Calu3 (cell line): ENCODE measurements at regions of chr1 and their contacts with region 1.

Region 1: GRCh38 chr1:110312188-110313121 is 26.7 kb upstream of the RBM15 start:
- DNase-seq: peak; percentile 78
- H3K4me3 Mint-ChIP-seq: no peak overlapping the region
- H3K27ac Mint-ChIP-seq: no peak overlapping the region
- H3K4me1 Mint-ChIP-seq: peaks cover 19% of the 10 kb centered on the region
- H3K27me3 Mint-ChIP-seq: no peaks in the 10 kb centered on the region
- CTCF ChIP-seq: peak; percentile 75

Region 2: GRCh38 chr1:110235834-110236682 is 76.4 kb before region 1 on chr1:
- CTCF ChIA-PET with region 1: interaction called, 4 read pairs
- intact Hi-C with region 1: loop called (anchors 1 kb)
- DNase-seq: peak; percentile 52
- H3K4me3 Mint-ChIP-seq: peak overlapping the region; percentile 61
- H3K27ac Mint-ChIP-seq: peak overlapping the region; percentile 95
- H3K4me1 Mint-ChIP-seq: peaks cover 72% of the 10 kb centered on the region
- H3K27me3 Mint-ChIP-seq: no peaks in the 10 kb centered on the region
- CTCF ChIP-seq: no peak

Region 3: DNA sequence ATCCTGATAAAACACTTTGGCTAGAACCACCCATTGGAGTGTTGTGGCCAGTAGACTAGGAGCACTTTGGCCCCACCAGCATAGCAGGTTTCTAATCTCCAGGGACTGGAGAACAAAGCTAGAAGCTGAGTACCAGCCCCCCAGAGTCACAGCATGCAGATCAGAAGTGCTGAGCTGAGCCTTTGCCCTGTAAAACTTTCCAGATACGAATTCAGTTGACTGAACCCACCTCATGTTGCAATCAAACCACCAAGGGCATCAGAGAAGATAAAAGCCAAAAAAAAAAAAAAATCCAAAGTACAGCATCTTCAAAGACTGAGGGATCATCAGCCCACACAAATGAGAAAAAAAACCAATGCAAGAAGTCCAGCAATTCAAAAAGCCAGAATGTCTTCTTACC is 551.8 kb after region 1 on chr1:
- CTCF ChIA-PET with region 1: no interaction called
- intact Hi-C with region 1: no loop called
- DNase-seq: no peak
- H3K4me3 Mint-ChIP-seq: no peak overlapping the region
- H3K27ac Mint-ChIP-seq: no peak overlapping the region
- H3K4me1 Mint-ChIP-seq: no peaks in the 10 kb centered on the region
- H3K27me3 Mint-ChIP-seq: peaks cover 9% of the 10 kb centered on the region
- CTCF ChIP-seq: no peak